Activated CD8-positive, alpha-beta T cell treated with anti-CD3 and anti-CD28 coated beads, Interleukin-2, amount 10 ng/mL, durations not matched to agents 7 days and 5 days (primary cell): ENCODE measurements at regions of chr7 and their contacts with region 1.

Region 1: DNA sequence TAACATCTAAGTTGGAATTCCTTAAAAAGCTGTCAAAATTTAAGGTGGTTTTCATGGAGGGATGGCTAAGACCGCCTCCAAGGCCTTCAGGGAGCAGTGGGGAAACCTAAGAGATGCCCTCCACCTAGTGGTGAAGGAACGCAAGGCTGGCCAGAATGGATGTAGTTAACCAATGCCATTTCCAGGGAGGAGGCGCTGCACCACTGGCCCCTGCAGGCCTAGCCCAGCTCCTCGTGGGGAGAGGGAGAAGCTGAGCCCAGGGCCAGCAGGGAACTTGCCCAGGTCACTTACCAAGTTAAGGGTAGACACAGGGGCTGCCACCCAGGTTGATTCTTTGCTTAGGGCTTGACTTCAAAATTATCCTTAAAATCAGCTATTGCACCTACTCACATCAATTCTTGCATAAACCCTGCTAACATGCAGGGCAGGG is 32.0 kb downstream of the FIGNL1 start:
- DNase-seq: peak; percentile 86
- ATAC-seq: peak; percentile 90
- H3K4me3 Mint-ChIP-seq: no peak overlapping the region
- H3K27ac Mint-ChIP-seq: no peak overlapping the region
- H3K4me1 Mint-ChIP-seq: peaks cover 27% of the 10 kb centered on the region
- H3K27me3 Mint-ChIP-seq: no peaks in the 10 kb centered on the region

Region 2: DNA sequence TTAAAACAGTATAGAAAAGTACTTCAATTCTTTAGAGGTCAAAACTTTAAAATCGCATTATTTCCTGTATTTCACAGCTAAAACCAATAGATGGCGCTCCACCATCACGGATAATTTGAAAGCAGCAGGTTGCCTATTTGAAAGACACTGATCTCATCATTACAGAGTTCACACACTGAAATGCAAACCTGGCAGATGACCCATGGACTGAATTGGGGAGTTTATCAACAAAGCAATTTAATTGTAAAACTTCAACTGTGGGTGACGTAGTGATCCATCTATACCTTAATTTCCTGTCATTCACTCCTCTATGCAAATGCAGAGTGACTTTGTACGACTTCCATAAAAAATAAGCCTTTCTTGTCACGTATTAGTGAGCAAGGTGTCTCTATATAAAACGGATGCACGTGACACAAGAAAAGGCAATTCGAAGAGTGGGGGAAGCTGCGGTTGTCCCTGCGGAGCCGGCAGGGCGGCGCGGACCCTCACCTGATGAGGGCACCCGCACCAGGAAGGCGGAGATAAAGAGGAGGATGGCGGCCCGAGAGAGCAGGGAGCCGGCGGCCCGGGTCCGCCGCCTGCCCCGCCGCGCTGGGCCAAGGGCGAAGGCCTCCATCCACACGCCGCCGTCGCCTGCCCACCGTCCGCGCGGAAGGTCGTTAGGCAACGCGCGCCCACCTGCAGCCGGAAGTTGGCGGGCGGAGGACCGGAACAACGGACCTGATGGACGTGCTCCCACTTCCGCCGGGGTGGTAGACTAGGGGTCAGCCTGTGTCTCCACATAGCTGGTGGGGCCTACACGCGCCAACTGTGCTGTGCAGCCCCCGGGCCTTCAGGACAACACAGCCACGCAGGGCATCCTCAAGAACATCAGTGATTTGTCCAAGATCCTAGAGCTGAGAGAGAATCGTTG is 325.3 kb before region 1 on chr7 and contains the start of gene ZPBP:
- CTCF ChIA-PET with region 1: interaction called, 68 read pairs
- POLR2A ChIA-PET with region 1: no interaction called
- DNase-seq: peak; percentile 71
- ATAC-seq: peak; percentile 80
- H3K4me3 Mint-ChIP-seq: peak within 1 kb of the TSS; percentile 80
- H3K27ac Mint-ChIP-seq: peak within 1 kb of the TSS; percentile 88
- H3K4me1 Mint-ChIP-seq: peaks cover 14% of the 10 kb centered on the region
- H3K27me3 Mint-ChIP-seq: peaks cover 14% of the 10 kb centered on the region
- total RNA-seq, gene ZPBP: not detected

Region 3: GRCh38 chr7:50112250-50112975 is 305.7 kb before region 1 on chr7:
- CTCF ChIA-PET with region 1: interaction called, 11 read pairs
- POLR2A ChIA-PET with region 1: no interaction called
- DNase-seq: no peak
- ATAC-seq: no peak
- H3K4me3 Mint-ChIP-seq: no peak overlapping the region
- H3K27ac Mint-ChIP-seq: no peak overlapping the region
- H3K4me1 Mint-ChIP-seq: peaks cover 2% of the 10 kb centered on the region
- H3K27me3 Mint-ChIP-seq: peaks cover 29% of the 10 kb centered on the region

Region 4: GRCh38 chr7:50119815-50120637 is 298.1 kb before region 1 on chr7:
- CTCF ChIA-PET with region 1: interaction called, 14 read pairs
- POLR2A ChIA-PET with region 1: no interaction called
- DNase-seq: peak; percentile 58
- ATAC-seq: peak; percentile 73
- H3K4me3 Mint-ChIP-seq: no peak overlapping the region
- H3K27ac Mint-ChIP-seq: no peak overlapping the region
- H3K4me1 Mint-ChIP-seq: no peaks in the 10 kb centered on the region
- H3K27me3 Mint-ChIP-seq: peaks cover 16% of the 10 kb centered on the region

Region 5: DNA sequence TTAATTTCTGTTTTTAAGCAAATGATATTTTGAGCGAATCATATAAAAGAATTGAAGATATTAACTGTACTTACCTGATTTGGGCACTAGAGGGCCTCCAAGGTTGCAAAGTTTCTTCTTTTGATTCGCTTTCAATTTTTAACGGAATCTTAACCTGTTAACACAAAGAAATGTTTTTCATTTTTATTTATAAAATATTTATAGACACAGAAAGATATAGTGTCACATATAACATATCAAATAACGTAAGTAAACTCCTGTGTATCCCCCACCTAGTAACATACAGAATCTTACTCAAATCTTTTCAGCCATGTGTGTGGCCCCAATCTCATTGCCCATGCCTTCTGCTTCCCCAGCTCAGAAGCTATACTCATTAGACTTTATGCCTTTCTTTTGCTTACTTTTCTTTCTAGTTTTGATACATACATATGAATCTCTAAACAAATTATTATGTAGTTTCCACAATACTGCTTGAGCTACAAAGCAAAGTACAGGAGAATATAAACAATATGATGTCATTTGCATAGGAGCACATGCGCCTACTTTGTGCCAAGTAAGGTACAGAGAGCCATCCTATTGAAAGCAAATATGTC is 275.6 kb before region 1 on chr7:
- CTCF ChIA-PET with region 1: interaction called, 76 read pairs
- POLR2A ChIA-PET with region 1: no interaction called
- DNase-seq: peak; percentile 71
- ATAC-seq: peak; percentile 72
- H3K4me3 Mint-ChIP-seq: peak overlapping the region; percentile 50
- H3K27ac Mint-ChIP-seq: peak overlapping the region; percentile 50
- H3K4me1 Mint-ChIP-seq: peaks cover 38% of the 10 kb centered on the region
- H3K27me3 Mint-ChIP-seq: peaks cover 6% of the 10 kb centered on the region

Region 6: GRCh38 chr7:50404392-50404791 is 13.7 kb before region 1 on chr7:
- CTCF ChIA-PET with region 1: interaction called, 18 read pairs
- POLR2A ChIA-PET with region 1: interaction called, 3 read pairs
- DNase-seq: peak; percentile 19
- ATAC-seq: no peak
- H3K4me3 Mint-ChIP-seq: no peak overlapping the region
- H3K27ac Mint-ChIP-seq: peak overlapping the region; percentile 37
- H3K4me1 Mint-ChIP-seq: peaks cover 49% of the 10 kb centered on the region
- H3K27me3 Mint-ChIP-seq: no peaks in the 10 kb centered on the region

Region 7: DNA sequence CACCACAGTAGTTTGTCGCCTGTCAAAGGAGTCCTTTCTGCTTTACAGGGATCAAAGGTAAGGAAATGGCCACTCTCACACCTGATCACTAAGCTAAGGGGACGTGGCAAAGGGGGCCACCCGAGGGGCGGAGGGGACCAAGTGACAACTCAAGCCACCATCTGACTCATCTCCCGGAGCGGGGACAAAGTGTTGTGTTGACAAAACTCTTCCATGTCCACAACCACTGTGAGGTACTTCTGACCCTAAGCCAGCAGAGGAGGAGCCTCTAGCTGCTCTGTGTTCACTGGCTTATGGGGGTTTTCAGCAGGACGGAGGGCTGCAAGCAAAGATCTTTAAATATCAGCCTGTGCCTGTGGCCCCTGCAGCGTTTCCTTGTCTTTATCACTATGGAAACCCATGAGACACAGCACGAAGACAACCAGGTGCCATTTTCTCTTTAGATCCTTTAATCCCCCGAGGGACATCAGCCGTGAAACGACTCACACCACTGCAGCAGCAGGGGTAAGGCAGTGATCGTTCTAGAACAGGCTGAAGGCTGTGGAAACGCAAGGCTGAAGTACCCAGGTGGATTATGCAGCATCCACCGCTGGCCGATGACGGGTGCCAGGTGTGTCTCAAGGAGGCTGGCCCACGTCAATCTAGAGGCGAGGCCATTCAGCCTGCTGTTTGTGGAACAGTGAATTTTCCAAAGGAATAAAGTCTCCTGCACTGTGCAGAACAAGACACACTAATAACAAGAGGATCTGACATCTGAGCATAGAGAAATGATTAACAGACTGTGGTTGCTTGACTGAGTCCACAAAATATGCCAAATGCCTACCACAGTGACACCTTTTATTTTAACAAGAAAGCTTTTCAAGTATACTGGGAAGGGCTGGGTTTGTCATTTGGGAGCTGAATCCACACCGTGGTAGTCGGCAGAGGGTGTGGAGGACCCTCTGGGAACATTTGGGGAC is 173.7 kb after region 1 on chr7:
- CTCF ChIA-PET with region 1: no interaction called
- POLR2A ChIA-PET with region 1: no interaction called
- DNase-seq: no peak
- ATAC-seq: no peak
- H3K4me3 Mint-ChIP-seq: no peak overlapping the region
- H3K27ac Mint-ChIP-seq: no peak overlapping the region
- H3K4me1 Mint-ChIP-seq: peaks cover 24% of the 10 kb centered on the region
- H3K27me3 Mint-ChIP-seq: no peaks in the 10 kb centered on the region